GM10248 (cell line): ENCODE measurements at regions of chr11 and their contacts with region 1.

Region 1: GRCh38 chr11:128831174-128832120 is 35.6 kb downstream of the KCNJ1 start:
- DNase-seq: peak; percentile 72
- CTCF ChIP-seq: peak; percentile 90

Region 2: DNA sequence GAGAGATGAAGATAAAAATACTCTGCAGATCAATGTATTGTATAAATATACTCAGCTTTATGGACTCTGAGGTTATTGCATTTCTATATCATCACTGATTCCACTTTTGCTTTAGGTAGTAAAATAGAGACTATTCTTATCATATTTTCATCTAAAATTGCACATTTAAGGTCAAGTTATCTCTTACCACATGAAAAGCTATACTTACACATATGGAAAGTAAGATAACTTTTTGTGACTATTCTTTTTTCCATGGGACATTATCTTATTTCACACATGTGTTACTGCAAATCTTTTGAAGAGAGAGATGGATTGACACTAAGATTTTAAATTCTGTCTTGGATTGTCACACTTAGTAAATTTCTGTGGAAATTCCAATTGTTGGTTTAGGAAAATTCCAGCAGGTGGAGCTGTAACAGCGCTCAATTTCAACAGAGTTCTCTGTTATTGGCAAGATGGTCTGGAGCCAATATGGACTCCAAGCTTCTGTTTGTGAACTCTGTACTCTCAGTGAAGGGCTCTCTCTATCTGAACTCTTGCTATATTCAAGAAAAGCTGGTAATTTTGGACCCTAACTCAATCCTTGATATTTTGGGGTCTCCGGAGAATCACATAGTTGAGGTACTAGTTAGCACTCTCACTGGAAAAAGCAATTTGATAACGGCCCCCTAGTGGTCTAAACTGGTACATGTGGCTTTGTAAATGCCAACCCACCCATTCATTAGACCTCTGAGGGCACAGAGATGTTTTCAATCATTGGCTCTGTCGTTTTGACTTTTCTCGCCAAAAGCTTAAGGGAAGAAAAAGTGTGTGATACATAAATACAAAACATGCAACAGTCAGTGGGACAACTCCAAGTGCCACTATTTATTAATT is 673.8 kb before region 1 on chr11:
- CTCF ChIA-PET with region 1: interaction called, 35 read pairs
- POLR2A ChIA-PET with region 1: no interaction called
- DNase-seq: peak; percentile 43
- CTCF ChIP-seq: peak; percentile 56

Region 3: GRCh38 chr11:128399251-128400121 is 432.0 kb before region 1 on chr11:
- CTCF ChIA-PET with region 1: no interaction called
- POLR2A ChIA-PET with region 1: no interaction called
- DNase-seq: no peak
- CTCF ChIP-seq: no peak

Region 4: GRCh38 chr11:128552783-128553661 is 278.4 kb before region 1 on chr11:
- CTCF ChIA-PET with region 1: interaction called, 10 read pairs
- POLR2A ChIA-PET with region 1: no interaction called
- DNase-seq: peak; percentile 80
- CTCF ChIP-seq: no peak

Region 5: DNA sequence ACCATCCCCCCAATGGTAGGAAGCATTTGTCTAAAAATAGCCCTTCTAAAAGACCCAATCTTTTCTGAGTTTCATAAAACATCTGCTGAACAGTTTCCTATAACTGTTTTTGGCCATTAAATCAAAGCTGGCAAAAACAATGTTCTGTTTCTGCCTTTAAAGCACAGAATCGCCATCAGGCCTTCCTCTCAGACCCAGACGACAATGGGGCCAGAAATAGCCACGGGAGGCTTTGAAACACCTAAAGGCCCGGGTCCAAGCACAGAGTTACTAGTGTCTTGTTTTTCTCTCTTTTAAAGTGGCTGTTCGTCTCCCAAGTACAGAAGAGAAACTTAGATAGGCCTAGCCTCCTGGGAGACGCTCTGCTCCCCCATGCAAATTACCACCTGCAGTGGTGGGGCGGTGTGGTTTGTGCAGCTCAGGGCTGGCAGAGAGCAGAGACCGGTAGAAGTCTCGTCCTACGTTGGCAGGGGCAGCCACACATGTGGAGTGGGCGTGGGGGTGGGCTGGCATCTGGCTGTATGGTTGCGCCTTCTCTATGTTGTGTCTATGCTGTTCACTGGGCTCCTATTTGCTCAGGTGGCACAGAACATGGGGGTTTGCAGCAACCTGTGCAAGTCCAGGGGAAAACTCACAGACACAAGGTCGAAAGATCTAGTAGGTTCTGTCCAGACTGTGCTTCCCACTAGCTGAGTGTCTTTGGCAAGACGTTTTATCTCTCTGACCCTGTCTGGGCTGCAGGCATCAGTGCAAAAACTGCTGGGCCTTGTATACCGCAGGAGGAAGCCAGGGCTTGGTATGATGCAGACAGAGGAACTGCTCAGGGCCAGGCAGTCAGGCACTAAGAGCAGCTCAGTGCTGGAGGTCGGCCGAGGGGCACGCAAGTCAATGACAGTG is 220.5 kb before region 1 on chr11:
- CTCF ChIA-PET with region 1: interaction called, 13 read pairs
- POLR2A ChIA-PET with region 1: no interaction called
- DNase-seq: peak; percentile 80
- CTCF ChIP-seq: no peak

Region 6: GRCh38 chr11:128733440-128734102 is 97.9 kb before region 1 on chr11:
- CTCF ChIA-PET with region 1: interaction called, 15 read pairs
- POLR2A ChIA-PET with region 1: no interaction called
- DNase-seq: no peak
- CTCF ChIP-seq: no peak

Region 7: DNA sequence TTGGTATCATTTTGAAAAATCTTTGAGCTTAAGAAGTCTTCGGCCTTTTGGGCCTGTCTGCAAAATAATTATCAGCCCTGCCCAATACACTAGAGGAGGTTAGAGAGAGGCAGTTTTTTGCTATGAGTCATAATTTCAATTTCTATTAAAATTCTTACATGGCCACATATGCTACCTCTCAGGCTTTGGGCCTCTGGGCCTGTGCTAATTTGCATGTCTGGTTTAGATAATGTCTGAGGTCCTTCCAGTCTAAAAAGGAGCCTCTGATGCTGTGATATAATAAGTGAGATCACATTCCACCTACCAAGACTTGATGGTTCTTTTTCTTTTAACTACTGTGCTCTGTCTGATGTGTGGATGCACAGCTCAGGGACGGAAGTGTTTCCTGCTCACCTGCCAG is 35.2 kb before region 1 on chr11:
- CTCF ChIA-PET with region 1: interaction called, 11 read pairs
- POLR2A ChIA-PET with region 1: no interaction called
- DNase-seq: peak; percentile 69
- CTCF ChIP-seq: no peak

Region 8: DNA sequence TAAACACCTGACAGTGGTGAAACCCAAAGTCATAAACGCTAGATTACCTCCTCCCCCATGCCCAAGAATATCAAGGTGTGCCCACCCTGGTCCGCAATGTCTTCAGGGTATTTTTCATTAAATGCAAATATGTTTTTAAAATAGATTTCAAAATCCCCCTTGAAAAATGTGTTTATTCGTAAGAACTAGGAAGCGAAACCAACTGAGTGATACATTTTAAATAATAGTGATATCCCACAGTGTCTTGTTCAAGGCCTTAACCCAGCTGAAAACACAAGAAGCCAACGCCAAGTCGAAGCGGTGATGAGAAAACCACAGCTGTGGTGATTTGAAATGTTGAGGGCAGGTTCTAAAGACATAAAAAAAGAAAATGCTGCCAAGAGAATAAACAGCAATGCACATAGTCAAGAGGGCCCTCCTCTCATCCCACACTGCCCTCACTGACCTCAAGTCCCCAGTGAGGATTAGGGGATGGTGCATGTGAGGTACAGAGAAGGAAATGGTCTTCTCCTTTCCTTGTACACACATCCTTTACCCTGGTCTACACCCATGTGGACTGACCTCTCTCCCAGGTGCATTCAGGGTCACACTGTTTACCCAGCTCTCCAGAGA is 10.1 kb after region 1 on chr11:
- CTCF ChIA-PET with region 1: interaction called, 28 read pairs
- POLR2A ChIA-PET with region 1: no interaction called
- DNase-seq: no peak
- CTCF ChIP-seq: no peak

Region 9: GRCh38 chr11:129620237-129621104 is 789.0 kb after region 1 on chr11:
- CTCF ChIA-PET with region 1: no interaction called
- POLR2A ChIA-PET with region 1: no interaction called
- DNase-seq: no peak
- CTCF ChIP-seq: no peak